CD14-positive monocyte (primary cell): ENCODE measurements at regions of chr10 and their contacts with region 1.

Region 1: DNA sequence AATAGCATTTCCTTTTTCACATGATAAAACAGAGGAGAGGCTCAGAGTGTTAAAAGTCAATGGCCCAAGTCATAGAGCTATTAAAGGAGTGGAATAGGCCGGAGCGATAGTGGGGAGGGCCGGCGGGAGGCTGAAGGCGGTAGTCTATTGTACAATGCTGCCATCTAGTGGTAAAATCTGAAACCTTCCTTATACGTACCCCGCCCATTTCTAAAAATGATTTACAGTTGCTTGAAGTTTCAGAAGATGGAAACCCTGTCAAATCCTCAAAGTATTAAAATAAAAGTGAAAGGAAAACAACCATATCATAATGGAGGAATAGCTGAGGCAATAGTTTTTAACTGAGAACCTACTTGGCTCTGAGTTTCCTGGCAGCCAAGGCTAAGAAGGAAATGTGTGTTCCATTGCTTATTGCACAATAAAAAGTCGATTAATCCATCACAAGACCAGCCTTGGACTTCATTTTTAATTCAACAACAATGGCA is 209.1 kb downstream of the CCSER2 start:
- DNase-seq: peak; percentile 34 to 69 (median 51)
- H3K4me3 ChIP-seq: no peak overlapping the region
- H3K4me3 Mint-ChIP-seq: no peak overlapping the region
- H3K27ac ChIP-seq: no peak overlapping the region
- H3K27ac Mint-ChIP-seq: no peak overlapping the region
- H3K4me1 ChIP-seq: peaks cover 6 to 8% of the 10 kb centered on the region in 2 donors
- H3K4me1 Mint-ChIP-seq: peaks cover 7% of the 10 kb centered on the region
- H3K27me3 ChIP-seq: peaks cover 3 to 22% of the 10 kb centered on the region in 2 donors
- H3K27me3 Mint-ChIP-seq: peaks cover 12 to 36% (median 20%) of the 10 kb centered on the region in 3 donors
- CTCF ChIP-seq: peak; percentile 88

Region 2: DNA sequence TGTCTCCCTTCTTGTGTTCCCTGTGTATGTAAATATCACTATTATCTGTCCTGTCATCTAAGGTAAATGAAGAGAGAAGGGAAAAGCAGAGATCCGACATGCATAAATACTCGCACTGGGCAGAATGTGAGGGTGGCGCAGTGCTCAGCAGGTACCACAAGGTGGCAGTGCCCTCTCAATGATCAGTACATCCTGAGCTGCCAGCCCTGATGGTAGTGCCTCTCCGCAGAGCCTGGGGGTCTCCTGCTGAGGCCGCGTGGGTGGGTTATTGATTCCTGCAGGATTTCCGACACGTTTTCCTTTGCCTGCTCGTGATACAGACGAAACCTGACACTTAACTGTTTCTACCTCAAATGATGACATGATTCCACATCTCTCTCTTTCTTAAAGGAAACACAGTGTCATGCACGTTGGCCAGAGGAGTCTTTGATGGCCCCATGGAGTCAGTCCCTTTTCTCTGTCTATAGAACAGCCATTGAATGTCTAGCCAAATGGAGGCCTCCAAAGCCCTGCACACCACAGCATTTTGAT is 272.8 kb before region 1 on chr10:
- intact Hi-C with region 1: loop called (anchors 1 to 2 kb)
- DNase-seq: peak; percentile 11 to 47 (median 44)
- H3K4me3 ChIP-seq: no peak overlapping the region
- H3K4me3 Mint-ChIP-seq: no peak overlapping the region
- H3K27ac ChIP-seq: no peak overlapping the region
- H3K27ac Mint-ChIP-seq: peak overlapping the region in 1 of 7 donors; percentile 2
- H3K4me1 ChIP-seq: no peaks in the 10 kb centered on the region
- H3K4me1 Mint-ChIP-seq: no peaks in the 10 kb centered on the region
- H3K27me3 ChIP-seq: no peaks in the 10 kb centered on the region
- H3K27me3 Mint-ChIP-seq: peaks cover 2 to 5% (median 4%) of the 10 kb centered on the region in 3 donors
- CTCF ChIP-seq: peak; percentile 91

Region 3: GRCh38 chr10:84375011-84375410 is 162.5 kb before region 1 on chr10:
- intact Hi-C with region 1: loop called (anchors 2 to 5 kb)
- DNase-seq: peak in 2 of 3 donors; percentile 35 to 48
- H3K4me3 ChIP-seq: no peak overlapping the region
- H3K4me3 Mint-ChIP-seq: no peak overlapping the region
- H3K27ac ChIP-seq: no peak overlapping the region
- H3K27ac Mint-ChIP-seq: no peak overlapping the region
- H3K4me1 ChIP-seq: no peaks in the 10 kb centered on the region
- H3K4me1 Mint-ChIP-seq: no peaks in the 10 kb centered on the region
- H3K27me3 ChIP-seq: no peaks in the 10 kb centered on the region
- H3K27me3 Mint-ChIP-seq: peaks cover 0 to 1% (median 0%) of the 10 kb centered on the region in 3 donors
- CTCF ChIP-seq: peak; percentile 76

Region 4: DNA sequence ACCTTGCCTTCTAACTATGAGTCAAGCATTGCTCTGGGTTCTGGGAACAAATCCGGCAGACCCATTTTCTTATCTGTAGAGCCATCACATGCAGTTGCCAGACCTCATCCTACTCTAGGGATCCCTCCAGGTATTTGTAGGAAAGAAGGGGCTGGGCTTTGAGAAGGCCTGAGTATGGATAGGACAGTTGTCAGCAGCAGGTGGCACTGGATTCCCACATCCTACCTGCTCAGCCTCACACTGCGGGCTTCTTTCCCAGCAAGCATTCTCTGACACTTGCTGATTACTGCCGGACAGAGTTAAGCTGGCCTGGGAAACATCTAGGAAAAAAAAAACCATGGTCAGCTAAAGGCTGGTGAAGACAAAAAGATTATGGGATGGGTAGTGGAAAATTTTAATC is 15.0 kb after region 1 on chr10:
- intact Hi-C with region 1: no loop called
- DNase-seq: no peak
- H3K4me3 ChIP-seq: no peak overlapping the region
- H3K4me3 Mint-ChIP-seq: no peak overlapping the region
- H3K27ac ChIP-seq: no peak overlapping the region
- H3K27ac Mint-ChIP-seq: no peak overlapping the region
- H3K4me1 ChIP-seq: no peaks in the 10 kb centered on the region
- H3K4me1 Mint-ChIP-seq: peaks cover 4% of the 10 kb centered on the region
- H3K27me3 ChIP-seq: no peaks in the 10 kb centered on the region
- H3K27me3 Mint-ChIP-seq: peaks cover 4 to 15% (median 9%) of the 10 kb centered on the region in 3 donors
- CTCF ChIP-seq: no peak

Region 5: DNA sequence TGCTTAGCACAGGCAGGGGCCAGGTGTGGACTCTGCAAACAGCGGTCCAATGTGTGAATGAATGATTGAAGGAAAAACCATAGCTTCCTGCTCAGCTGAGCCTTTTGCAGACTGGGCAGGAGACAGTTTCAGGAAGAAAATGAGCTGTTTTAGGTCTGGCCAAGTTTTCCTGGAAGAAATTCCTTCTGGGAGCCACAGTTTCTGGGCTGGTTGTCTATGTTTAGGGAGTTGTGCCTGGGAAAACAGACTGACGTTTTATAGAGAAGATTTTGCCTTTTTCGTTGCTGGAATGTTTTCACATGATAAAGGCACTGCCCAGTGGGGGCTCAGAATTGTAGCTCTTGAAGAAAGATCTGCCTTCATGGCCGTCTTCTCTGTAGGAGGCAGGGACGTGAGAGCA is 46.0 kb after region 1 on chr10:
- intact Hi-C with region 1: no loop called
- DNase-seq: no peak
- H3K4me3 ChIP-seq: no peak overlapping the region
- H3K4me3 Mint-ChIP-seq: no peak overlapping the region
- H3K27ac ChIP-seq: no peak overlapping the region
- H3K27ac Mint-ChIP-seq: no peak overlapping the region
- H3K4me1 ChIP-seq: no peaks in the 10 kb centered on the region
- H3K4me1 Mint-ChIP-seq: no peaks in the 10 kb centered on the region
- H3K27me3 ChIP-seq: no peaks in the 10 kb centered on the region
- H3K27me3 Mint-ChIP-seq: peaks cover 3 to 9% (median 6%) of the 10 kb centered on the region in 3 donors
- CTCF ChIP-seq: no peak

Region 6: GRCh38 chr10:86376852-86377796 is 1839.6 kb after region 1 on chr10:
- intact Hi-C with region 1: loop called (anchors 5 kb)
- DNase-seq: peak; percentile 45 to 62 (median 49)
- H3K4me3 ChIP-seq: no peak overlapping the region
- H3K4me3 Mint-ChIP-seq: peak overlapping the region in 1 of 2 donors; percentile 51
- H3K27ac ChIP-seq: no peak overlapping the region
- H3K27ac Mint-ChIP-seq: no peak overlapping the region
- H3K4me1 ChIP-seq: peaks cover 3 to 4% of the 10 kb centered on the region in 2 donors
- H3K4me1 Mint-ChIP-seq: no peaks in the 10 kb centered on the region
- H3K27me3 ChIP-seq: peaks cover 0 to 25% of the 10 kb centered on the region in 2 donors
- H3K27me3 Mint-ChIP-seq: peaks cover 31 to 57% (median 42%) of the 10 kb centered on the region in 3 donors
- CTCF ChIP-seq: peak; percentile 99